Natural killer cell (primary cell): ENCODE measurements at regions of chr2 and their contacts with region 1.

Region 1: GRCh38 chr2:64586883-64587481 is 62.9 kb downstream of the AFTPH start:
- DNase-seq: peak in 1 of 2 donors; percentile 72
- ATAC-seq: peak; percentile 62 to 79 (median 70)
- H3K4me3 ChIP-seq: no peak overlapping the region
- H3K4me3 Mint-ChIP-seq: no peak overlapping the region
- H3K27ac ChIP-seq: no peak overlapping the region
- H3K27ac Mint-ChIP-seq: peak overlapping the region in 1 of 2 donors; percentile 16
- H3K4me1 ChIP-seq: no peaks in the 10 kb centered on the region
- H3K4me1 Mint-ChIP-seq: peaks cover 6 to 7% of the 10 kb centered on the region in 2 donors
- H3K27me3 ChIP-seq: no peaks in the 10 kb centered on the region
- H3K27me3 Mint-ChIP-seq: no peaks in the 10 kb centered on the region
- CTCF ChIP-seq: peak; percentile 75

Region 2: GRCh38 chr2:63862806-63863205 is 724.2 kb before region 1 on chr2:
- intact Hi-C with region 1: no loop called
- DNase-seq: no peak
- ATAC-seq: no peak
- H3K4me3 ChIP-seq: no peak overlapping the region
- H3K4me3 Mint-ChIP-seq: no peak overlapping the region
- H3K27ac ChIP-seq: no peak overlapping the region
- H3K27ac Mint-ChIP-seq: peak overlapping the region; percentile 52 to 93
- H3K4me1 ChIP-seq: peaks cover 6% of the 10 kb centered on the region
- H3K4me1 Mint-ChIP-seq: peaks cover 18 to 25% of the 10 kb centered on the region in 2 donors
- H3K27me3 ChIP-seq: no peaks in the 10 kb centered on the region
- H3K27me3 Mint-ChIP-seq: no peaks in the 10 kb centered on the region
- CTCF ChIP-seq: no peak

Region 3: GRCh38 chr2:64831134-64831976 is 244.4 kb after region 1 on chr2:
- intact Hi-C with region 1: loop called (anchors 1 kb)
- DNase-seq: peak; percentile 70 to 89
- ATAC-seq: peak; percentile 88 to 90 (median 90)
- H3K4me3 ChIP-seq: no peak overlapping the region
- H3K4me3 Mint-ChIP-seq: no peak overlapping the region
- H3K27ac ChIP-seq: no peak overlapping the region
- H3K27ac Mint-ChIP-seq: no peak overlapping the region
- H3K4me1 ChIP-seq: peaks cover 9% of the 10 kb centered on the region
- H3K4me1 Mint-ChIP-seq: no peaks in the 10 kb centered on the region
- H3K27me3 ChIP-seq: no peaks in the 10 kb centered on the region
- H3K27me3 Mint-ChIP-seq: peaks cover 8 to 14% of the 10 kb centered on the region in 2 donors
- CTCF ChIP-seq: peak; percentile 98

Region 4: GRCh38 chr2:64846179-64846578 is 259.2 kb after region 1 on chr2:
- intact Hi-C with region 1: no loop called
- DNase-seq: no peak
- ATAC-seq: no peak
- H3K4me3 ChIP-seq: no peak overlapping the region
- H3K4me3 Mint-ChIP-seq: no peak overlapping the region
- H3K27ac ChIP-seq: no peak overlapping the region
- H3K27ac Mint-ChIP-seq: no peak overlapping the region
- H3K4me1 ChIP-seq: peaks cover 4% of the 10 kb centered on the region
- H3K4me1 Mint-ChIP-seq: peaks cover 0 to 7% of the 10 kb centered on the region in 2 donors
- H3K27me3 ChIP-seq: no peaks in the 10 kb centered on the region
- H3K27me3 Mint-ChIP-seq: no peaks in the 10 kb centered on the region
- CTCF ChIP-seq: no peak

Region 5: GRCh38 chr2:64865073-64865830 is 278.3 kb after region 1 on chr2:
- intact Hi-C with region 1: loop called (anchors 1 kb)
- DNase-seq: peak; percentile 64 to 83
- ATAC-seq: peak; percentile 84 to 88 (median 88)
- H3K4me3 ChIP-seq: peak overlapping the region; percentile 53
- H3K4me3 Mint-ChIP-seq: no peak overlapping the region
- H3K27ac ChIP-seq: peak overlapping the region; percentile 50
- H3K27ac Mint-ChIP-seq: no peak overlapping the region
- H3K4me1 ChIP-seq: peaks cover 38% of the 10 kb centered on the region
- H3K4me1 Mint-ChIP-seq: no peaks in the 10 kb centered on the region
- H3K27me3 ChIP-seq: peaks cover 3% of the 10 kb centered on the region
- H3K27me3 Mint-ChIP-seq: peaks cover 4 to 9% of the 10 kb centered on the region in 2 donors
- CTCF ChIP-seq: peak; percentile 94

Region 6: DNA sequence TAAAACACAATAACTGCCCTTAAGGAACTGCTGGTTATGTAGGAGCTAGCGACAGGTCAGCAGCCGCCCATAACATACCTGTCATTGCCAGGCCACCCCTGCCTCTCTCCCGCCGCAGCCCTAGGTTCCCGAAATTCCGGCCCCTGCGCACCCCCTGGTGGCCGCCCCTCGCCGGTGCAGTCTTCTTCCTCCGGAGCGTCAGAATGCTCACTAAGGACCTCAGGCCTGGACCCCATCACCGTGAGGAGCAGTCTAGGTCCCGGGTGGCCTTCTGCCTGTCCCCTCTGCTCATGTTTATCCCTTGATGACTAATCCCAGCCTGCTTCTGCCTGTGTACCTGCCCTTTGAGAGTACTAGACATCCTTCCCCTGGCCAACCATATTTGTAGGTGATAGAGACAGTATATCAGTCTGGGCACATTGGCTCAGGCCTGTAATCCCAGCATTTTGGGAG is 286.5 kb after region 1 on chr2:
- intact Hi-C with region 1: loop called (anchors 2 kb)
- DNase-seq: peak; percentile 80 to 83
- ATAC-seq: peak; percentile 91 to 98 (median 98)
- H3K4me3 ChIP-seq: no peak overlapping the region
- H3K4me3 Mint-ChIP-seq: no peak overlapping the region
- H3K27ac ChIP-seq: no peak overlapping the region
- H3K27ac Mint-ChIP-seq: peak overlapping the region in 1 of 2 donors; percentile 17
- H3K4me1 ChIP-seq: peaks cover 8% of the 10 kb centered on the region
- H3K4me1 Mint-ChIP-seq: peaks cover 0 to 8% of the 10 kb centered on the region in 2 donors
- H3K27me3 ChIP-seq: no peaks in the 10 kb centered on the region
- H3K27me3 Mint-ChIP-seq: peaks cover 2 to 5% of the 10 kb centered on the region in 2 donors
- CTCF ChIP-seq: peak; percentile 93